ENCODE measurements at regions of chr1 and their contacts with region 1.

Region 1: GRCh38 chr1:201023517-201023902 is at the start of gene KIF21B:
- DNase-seq: peak; percentile 95
- ATAC-seq: peak; percentile 64
- H3K4me3 Mint-ChIP-seq: peak within 1 kb of the TSS; percentile 99
- H3K27ac Mint-ChIP-seq: peak within 1 kb of the TSS; percentile 99
- H3K4me1 Mint-ChIP-seq: peaks cover 77% of the 10 kb centered on the region
- H3K27me3 Mint-ChIP-seq: no peaks in the 10 kb centered on the region
- total RNA-seq, gene KIF21B: 62.8 to 67.1 TPM

Region 2: DNA sequence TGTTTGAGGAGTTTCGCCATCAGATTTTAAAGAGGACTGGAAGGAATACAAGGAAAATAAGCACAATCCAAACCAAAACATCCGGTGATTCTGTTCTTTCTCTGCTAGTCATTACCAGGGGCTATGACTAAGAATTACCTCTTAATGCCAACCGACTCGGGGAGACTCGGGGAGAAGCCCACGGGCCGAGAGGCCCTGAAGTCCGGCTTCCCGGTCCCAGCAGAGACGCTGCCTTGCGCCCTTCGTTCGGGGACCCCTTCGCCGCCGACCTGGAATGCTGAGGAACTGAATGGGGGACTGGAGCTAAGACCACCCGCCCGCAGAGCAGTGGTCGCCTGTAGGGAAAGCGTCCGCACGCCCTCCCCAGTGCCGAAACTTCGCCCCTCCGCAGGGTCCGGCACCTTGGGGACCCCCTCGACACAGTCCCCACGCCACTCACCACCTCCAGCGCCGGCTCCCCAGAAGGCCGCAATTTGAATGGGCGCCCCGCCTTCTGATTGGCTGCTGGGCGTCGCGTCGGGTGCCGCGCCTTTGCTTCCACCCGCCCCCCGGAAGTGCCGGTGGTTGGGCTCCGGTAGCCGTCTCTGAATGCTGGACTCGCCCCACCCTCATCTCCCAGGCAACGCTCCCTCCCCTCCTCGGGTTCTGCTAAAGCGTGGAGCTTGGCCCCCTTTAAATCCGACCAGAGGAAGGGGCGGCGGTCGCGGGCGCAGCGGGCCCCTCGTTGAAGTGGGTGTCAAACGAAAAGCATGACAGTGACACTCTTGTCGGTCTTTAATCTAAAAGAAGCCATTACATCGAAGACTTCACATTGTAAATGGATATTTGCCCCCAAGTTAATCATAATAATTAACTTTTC is 403.0 kb before region 1 on chr1 and contains the start of gene KIF14:
- CTCF ChIA-PET with region 1: interaction called, 3 read pairs
- POLR2A ChIA-PET with region 1: interaction called, 3 read pairs
- intact Hi-C with region 1: loop called in 1 of 2 experiments (anchors 1 kb)
- DNase-seq: peak; percentile 96
- ATAC-seq: peak; percentile 93
- H3K4me3 Mint-ChIP-seq: peak within 1 kb of the TSS; percentile 84
- H3K27ac Mint-ChIP-seq: peak within 1 kb of the TSS; percentile 88
- H3K4me1 Mint-ChIP-seq: peaks cover 24% of the 10 kb centered on the region
- H3K27me3 Mint-ChIP-seq: no peaks in the 10 kb centered on the region
- total RNA-seq, gene KIF14: 14.8 to 14.9 TPM

Region 3: DNA sequence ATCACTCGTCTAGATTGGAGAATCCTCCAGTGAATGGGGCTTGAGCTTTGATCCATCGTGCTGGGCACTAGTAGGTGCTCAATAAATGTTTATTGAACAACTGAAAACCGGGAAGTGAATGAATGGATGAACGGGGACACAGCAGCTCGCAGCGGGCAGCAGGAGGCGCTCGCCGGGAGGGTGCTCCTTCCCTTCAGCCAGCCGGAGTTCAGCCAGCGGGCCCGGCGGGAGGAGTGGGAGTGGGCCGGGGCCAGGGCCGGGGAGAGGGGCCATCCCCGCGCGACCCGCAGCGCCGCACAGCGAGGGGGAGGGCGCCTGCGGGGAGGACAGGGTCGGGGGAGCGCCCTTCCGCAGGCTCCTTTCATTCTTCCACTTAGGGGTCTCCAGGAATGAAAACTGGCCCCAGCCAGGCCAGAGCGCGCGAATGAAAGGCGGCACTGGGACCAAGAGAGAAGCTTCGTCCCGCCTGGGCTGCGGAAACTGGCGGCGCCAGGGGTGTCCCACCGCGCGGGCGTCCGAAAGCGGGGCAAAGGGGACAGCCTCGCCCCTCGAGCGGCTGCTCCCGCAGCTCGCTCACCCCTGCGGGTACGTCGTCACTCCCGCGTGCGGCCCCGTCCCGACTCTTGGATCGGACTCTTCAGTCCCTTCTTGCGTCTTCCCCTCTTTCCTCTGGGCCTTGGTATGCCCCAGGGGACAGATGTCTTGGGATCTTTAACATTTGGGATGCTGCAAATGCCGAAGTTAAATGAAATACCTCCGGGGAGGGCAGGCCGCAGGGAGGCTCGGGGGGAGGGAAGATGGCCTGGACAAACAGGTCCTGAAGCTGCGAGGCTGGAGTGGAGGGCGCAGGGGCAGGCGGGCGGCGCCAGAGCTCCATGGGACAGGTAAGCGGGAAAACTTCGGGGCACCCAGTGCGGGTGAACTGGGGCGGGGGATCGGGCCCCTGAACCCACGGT is 132.4 kb before region 1 on chr1:
- CTCF ChIA-PET with region 1: no interaction called
- POLR2A ChIA-PET with region 1: no interaction called
- intact Hi-C with region 1: loop called in 1 of 2 experiments (anchors 5 kb)
- DNase-seq: no peak
- ATAC-seq: no peak
- H3K4me3 Mint-ChIP-seq: peak overlapping the region; percentile 12
- H3K27ac Mint-ChIP-seq: no peak overlapping the region
- H3K4me1 Mint-ChIP-seq: peaks cover 46% of the 10 kb centered on the region
- H3K27me3 Mint-ChIP-seq: peaks cover 35% of the 10 kb centered on the region

Region 4: GRCh38 chr1:201042779-201043461 is 19.4 kb after region 1 on chr1:
- CTCF ChIA-PET with region 1: interaction called, 19 read pairs
- POLR2A ChIA-PET with region 1: no interaction called
- intact Hi-C with region 1: no loop called
- DNase-seq: peak; percentile 85
- ATAC-seq: peak; percentile 96
- H3K4me3 Mint-ChIP-seq: no peak overlapping the region
- H3K27ac Mint-ChIP-seq: no peak overlapping the region
- H3K4me1 Mint-ChIP-seq: no peaks in the 10 kb centered on the region
- H3K27me3 Mint-ChIP-seq: no peaks in the 10 kb centered on the region

Region 5: GRCh38 chr1:201170533-201171062 is 147.1 kb after region 1 on chr1:
- CTCF ChIA-PET with region 1: no interaction called
- POLR2A ChIA-PET with region 1: no interaction called
- intact Hi-C with region 1: loop called in 1 of 2 experiments (anchors 2 kb)
- DNase-seq: peak; percentile 92
- ATAC-seq: peak; percentile 83
- H3K4me3 Mint-ChIP-seq: peak overlapping the region; percentile 71
- H3K27ac Mint-ChIP-seq: peak overlapping the region; percentile 90
- H3K4me1 Mint-ChIP-seq: peaks cover 21% of the 10 kb centered on the region
- H3K27me3 Mint-ChIP-seq: peaks cover 15% of the 10 kb centered on the region

Region 6: GRCh38 chr1:201955009-201955728 is 931.7 kb after region 1 on chr1 and contains the start of gene TIMM17A:
- CTCF ChIA-PET with region 1: no interaction called
- POLR2A ChIA-PET with region 1: no interaction called
- intact Hi-C with region 1: loop called in 1 of 2 experiments (anchors 10 kb)
- DNase-seq: peak; percentile 97
- ATAC-seq: peak; percentile 100
- H3K4me3 Mint-ChIP-seq: peak within 1 kb of the TSS; percentile 99
- H3K27ac Mint-ChIP-seq: peak within 1 kb of the TSS; percentile 97
- H3K4me1 Mint-ChIP-seq: peaks cover 16% of the 10 kb centered on the region
- H3K27me3 Mint-ChIP-seq: no peaks in the 10 kb centered on the region
- total RNA-seq, gene TIMM17A: 51.9 to 70.6 TPM